ENCODE measurements at regions of chr16 and their contacts with region 1.

Region 1: DNA sequence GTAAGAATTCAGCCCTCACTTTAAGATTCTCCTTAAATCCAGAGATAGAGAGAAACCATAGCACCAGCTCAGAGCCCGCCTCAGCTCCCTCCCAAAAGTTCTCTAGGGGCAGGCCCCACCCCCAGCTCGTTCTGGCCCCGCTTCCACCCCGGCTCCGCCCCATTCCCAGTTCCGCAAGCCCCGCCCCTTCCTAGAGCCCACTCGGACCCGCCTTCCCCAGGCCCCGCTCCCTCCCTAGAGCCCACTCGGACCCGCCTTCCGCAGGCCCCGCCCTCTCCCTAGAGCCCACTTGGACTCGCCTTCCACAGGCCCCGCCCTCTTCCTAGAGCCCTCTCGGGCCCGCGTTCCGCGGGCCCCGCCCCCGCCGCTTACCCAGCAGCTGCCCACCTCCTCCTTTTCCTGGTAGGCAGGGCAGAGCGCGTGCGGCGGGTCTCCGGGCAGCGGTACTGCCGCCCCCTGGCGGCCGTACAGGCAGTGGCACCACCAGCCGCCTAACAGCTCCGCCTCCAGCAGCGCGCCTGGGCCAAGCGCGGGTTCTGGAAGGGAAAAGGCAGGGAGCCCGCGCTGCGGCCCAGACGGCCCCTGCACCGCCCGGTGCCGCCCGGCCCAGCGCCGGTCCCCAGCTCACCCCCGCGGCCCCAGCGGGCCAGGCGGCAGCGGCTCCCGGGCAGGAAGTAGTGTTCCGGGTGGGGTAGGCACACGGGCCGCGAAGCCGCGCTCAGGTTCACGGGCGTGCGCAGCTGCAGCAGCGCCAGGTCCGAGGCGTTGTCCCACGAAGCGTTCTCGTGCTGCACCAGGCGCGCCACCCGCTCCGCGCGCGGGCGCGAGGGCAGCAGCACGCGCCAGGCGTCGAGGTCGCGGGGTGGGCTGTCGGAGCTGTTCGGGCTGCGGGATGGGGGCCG is 6.8 kb upstream of the PRSS8 start:
- DNase-seq: peak; percentile 99
- ATAC-seq: peak; percentile 95
- H3K4me3 ChIP-seq: peak overlapping the region in 4 of 5 experiments; percentile 21 to 71 (median 50)
- H3K4me3 Mint-ChIP-seq: peak overlapping the region; percentile 76
- H3K27ac ChIP-seq: peak overlapping the region; percentile 21 to 54
- H3K27ac Mint-ChIP-seq: peak overlapping the region; percentile 88
- H3K4me1 ChIP-seq: peaks cover 6 to 13% of the 10 kb centered on the region in 2 donors
- H3K4me1 Mint-ChIP-seq: peaks cover 9% of the 10 kb centered on the region
- H3K27me3 ChIP-seq: no peaks in the 10 kb centered on the region
- H3K27me3 Mint-ChIP-seq: peaks cover 6% of the 10 kb centered on the region
- CTCF ChIP-seq: peak; percentile 90

Region 2: DNA sequence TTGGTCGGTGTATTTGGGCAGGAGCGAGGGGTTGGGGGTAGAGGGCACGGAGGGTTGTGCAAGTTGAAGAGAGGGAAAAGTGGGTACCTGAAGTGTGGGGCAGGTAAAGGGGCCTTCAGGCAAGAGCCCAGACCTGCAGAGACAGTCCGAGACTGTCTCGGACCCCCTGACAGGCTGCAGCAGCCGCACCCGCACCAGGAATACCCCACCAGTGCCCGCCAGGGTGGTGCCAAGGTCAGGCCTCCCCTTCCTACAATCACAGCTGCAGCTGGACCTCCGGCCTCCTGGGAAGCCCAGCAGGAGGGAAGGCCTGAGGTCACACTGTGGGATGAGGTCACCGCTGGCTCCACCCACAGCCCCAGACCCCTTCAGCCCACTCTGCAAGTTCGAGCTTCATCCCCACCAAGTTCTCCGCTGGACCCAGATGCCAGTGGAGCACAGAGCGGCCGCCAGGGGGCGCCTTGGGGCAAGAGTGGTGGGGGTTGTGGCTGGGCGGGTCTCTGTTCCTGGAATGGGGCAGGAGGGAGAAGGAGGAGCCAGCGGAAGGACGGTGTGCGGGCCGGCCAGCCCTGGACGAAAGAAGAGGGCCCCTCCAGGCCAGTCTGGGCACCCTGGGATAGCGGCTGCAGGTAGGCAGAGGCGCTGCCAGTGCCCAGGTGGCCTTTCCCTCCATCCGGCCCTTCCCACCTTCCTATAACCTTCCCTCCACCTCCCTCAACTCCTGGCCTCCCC is 157.5 kb before region 1 on chr16 and contains the start of gene HSD3B7:
- CTCF ChIA-PET with region 1: interaction called, 56 read pairs
- POLR2A ChIA-PET with region 1: interaction called, 8 read pairs
- intact Hi-C with region 1: loop called (anchors 1 kb)
- DNase-seq: peak; percentile 81
- ATAC-seq: peak; percentile 81
- H3K4me3 ChIP-seq: no peak within 1 kb of the TSS
- H3K4me3 Mint-ChIP-seq: no peak within 1 kb of the TSS
- H3K27ac ChIP-seq: no peak within 1 kb of the TSS
- H3K27ac Mint-ChIP-seq: no peak within 1 kb of the TSS
- H3K4me1 ChIP-seq: peaks cover 3 to 6% of the 10 kb centered on the region in 2 donors
- H3K4me1 Mint-ChIP-seq: no peaks in the 10 kb centered on the region
- H3K27me3 ChIP-seq: no peaks in the 10 kb centered on the region
- H3K27me3 Mint-ChIP-seq: no peaks in the 10 kb centered on the region
- CTCF ChIP-seq: peak; percentile 90
- total RNA-seq, gene HSD3B7: 1.0 and 1.2 TPM in 2 replicates

Region 3: DNA sequence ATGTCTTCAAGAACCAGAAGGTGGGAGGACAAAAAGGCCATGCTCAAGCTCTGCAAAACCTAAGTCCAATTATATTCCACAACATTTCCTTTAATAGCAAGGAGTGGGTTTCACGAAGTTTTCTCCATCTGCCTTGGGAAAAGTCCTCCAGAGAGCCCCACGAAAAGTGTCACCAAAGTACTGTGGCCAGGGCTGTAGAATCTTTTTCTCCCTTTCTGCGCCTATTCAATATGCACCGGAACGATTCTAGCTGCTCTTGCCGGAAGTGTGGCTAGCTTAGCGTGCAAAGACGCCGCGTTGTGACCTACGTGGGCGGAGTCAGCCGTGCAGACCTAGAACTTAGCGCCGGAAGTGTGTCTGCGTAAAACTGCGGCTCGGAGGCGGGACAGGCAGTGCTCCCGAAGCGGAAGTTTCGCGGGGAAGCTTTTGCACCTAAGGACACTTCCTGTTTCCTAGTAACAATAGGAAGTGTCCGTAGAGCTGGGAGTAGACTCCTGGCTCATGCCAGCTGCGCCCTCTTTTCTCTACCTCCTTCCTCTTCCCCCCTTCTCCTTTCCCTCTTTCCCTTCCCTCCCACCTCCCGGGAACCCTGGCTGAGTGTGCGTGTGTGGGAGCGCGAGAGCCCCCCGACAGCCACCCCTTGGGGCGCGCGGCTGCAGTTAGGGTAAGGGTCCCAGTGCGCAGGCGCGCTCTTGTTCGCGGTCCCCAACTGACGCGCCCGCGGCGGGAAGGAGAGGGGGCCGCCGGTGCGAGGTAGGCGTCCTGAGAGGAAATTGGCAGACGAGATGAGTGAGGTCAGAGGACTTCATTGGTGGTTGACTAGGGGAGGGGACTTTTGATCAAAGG is 68.2 kb before region 1 on chr16 and contains the starts of genes ZNF646 and ZNF668:
- CTCF ChIA-PET with region 1: interaction called, 18 read pairs
- POLR2A ChIA-PET with region 1: interaction called, 12 read pairs
- intact Hi-C with region 1: loop called (anchors 1 kb)
- DNase-seq: peak; percentile 99
- ATAC-seq: peak; percentile 86
- H3K4me3 ChIP-seq: peak within 1 kb of the TSS; percentile 73 to 99 (median 91)
- H3K4me3 Mint-ChIP-seq: peak within 1 kb of the TSS; percentile 95
- H3K27ac ChIP-seq: peak within 1 kb of the TSS; percentile 78 to 89
- H3K27ac Mint-ChIP-seq: peak within 1 kb of the TSS; percentile 96
- H3K4me1 ChIP-seq: peaks cover 20 to 25% of the 10 kb centered on the region in 2 donors
- H3K4me1 Mint-ChIP-seq: peaks cover 36% of the 10 kb centered on the region
- H3K27me3 ChIP-seq: no peaks in the 10 kb centered on the region
- H3K27me3 Mint-ChIP-seq: no peaks in the 10 kb centered on the region
- CTCF ChIP-seq: no peak
- total RNA-seq, gene ZNF646: 45.9 and 51.7 TPM in 2 replicates
- total RNA-seq, gene ZNF668: 11.1 and 12.0 TPM in 2 replicates

Region 4: DNA sequence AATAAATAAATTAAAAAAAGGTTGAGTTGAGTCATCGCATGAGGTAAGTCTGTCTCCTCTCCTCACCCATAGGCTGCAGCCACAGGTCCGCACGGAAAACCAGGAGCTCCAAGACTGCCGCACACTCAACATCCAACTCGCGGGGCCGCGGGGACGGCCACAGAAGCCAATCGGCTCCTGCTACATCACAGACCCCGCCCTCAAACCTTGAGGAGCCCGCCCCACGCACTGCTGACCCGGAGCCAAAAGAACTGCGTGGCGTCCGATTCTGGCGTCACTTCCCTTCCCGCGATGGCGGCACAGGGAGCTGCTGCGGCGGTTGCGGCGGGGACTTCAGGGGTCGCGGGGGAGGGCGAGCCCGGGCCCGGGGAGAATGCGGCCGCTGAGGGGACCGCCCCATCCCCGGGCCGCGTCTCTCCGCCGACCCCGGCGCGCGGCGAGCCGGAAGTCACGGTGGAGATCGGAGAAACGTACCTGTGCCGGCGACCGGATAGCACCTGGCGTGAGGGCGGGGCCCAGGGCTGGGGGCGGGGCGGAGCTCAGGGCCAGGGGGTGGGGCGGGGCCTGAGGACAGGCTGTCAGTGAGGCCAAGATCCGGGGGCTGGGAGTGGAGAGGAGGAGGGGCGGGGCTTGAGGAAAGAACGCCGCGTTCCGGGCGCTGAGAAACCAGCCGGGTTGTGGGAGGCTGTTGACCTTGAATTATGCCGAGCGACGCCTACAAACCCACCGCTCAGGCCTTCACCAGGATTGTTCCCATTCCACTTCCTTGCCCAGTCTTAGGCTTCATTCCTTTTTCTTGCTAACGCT is 24.8 kb before region 1 on chr16 and contains the start of gene KAT8:
- CTCF ChIA-PET with region 1: interaction called, 24 read pairs
- POLR2A ChIA-PET with region 1: interaction called, 36 read pairs
- intact Hi-C with region 1: loop called (anchors 1 kb)
- DNase-seq: peak; percentile 98
- ATAC-seq: peak; percentile 94
- H3K4me3 ChIP-seq: peak within 1 kb of the TSS; percentile 49 to 83 (median 66)
- H3K4me3 Mint-ChIP-seq: peak within 1 kb of the TSS; percentile 92
- H3K27ac ChIP-seq: peak within 1 kb of the TSS; percentile 72 to 95
- H3K27ac Mint-ChIP-seq: peak within 1 kb of the TSS; percentile 96
- H3K4me1 ChIP-seq: peaks cover 10 to 20% of the 10 kb centered on the region in 2 donors
- H3K4me1 Mint-ChIP-seq: peaks cover 15% of the 10 kb centered on the region
- H3K27me3 ChIP-seq: no peaks in the 10 kb centered on the region
- H3K27me3 Mint-ChIP-seq: no peaks in the 10 kb centered on the region
- CTCF ChIP-seq: no peak
- total RNA-seq, gene KAT8: 100.0 and 102 TPM in 2 replicates

Region 5: DNA sequence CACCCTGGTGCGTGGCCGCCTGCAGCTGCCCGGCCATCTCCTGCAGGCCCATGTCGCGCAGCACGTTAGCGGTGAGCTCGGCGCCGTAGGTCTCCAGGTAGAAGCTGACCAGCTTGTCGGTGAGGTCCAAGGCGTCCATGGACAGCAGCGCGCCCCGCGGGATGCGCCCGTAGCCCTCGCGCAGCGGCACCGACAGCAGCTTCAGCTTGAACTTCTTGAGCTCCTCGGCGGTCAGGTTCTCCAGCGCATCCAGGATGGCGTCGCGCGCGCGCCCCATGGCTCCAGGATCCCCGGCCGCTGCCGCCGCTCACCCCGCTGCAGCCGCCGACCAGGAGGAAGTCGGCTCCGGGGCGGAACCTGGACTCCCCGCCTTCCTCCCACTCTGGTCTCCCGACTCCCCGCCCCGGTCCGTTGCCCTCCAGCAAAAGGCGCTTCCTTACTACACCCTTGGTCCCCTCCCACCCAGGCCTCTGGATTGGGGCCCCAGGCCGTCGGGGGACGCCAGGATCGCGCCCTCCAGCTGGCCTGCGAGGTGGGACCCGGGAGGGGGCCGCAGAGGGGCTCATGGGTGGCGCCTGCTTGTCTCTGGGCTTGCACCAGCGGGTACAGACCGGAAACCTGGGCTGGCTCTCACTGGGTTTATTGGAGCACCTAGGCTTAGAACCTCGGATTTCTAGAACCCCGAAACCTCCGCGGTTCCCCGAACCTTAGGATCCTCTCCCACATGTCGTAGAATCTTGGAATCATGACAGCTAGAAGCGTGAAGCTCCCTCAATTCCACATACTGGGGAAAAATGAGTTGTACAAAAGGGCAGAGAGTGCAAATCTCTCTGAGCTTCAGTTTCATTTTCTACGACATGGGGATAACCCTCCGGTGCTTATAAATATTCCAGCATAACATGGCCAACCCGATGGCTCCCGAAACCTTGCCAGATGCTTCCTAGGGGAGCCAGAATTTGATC is 60.3 kb after region 1 on chr16 and contains the start of gene PYCARD:
- CTCF ChIA-PET with region 1: interaction called, 10 read pairs
- POLR2A ChIA-PET with region 1: interaction called, 6 read pairs
- intact Hi-C with region 1: loop called (anchors 2 kb)
- DNase-seq: no peak
- ATAC-seq: peak; percentile 34
- H3K4me3 ChIP-seq: peak within 1 kb of the TSS; percentile 59 to 86 (median 78)
- H3K4me3 Mint-ChIP-seq: peak within 1 kb of the TSS; percentile 92
- H3K27ac ChIP-seq: peak within 1 kb of the TSS; percentile 62 to 73
- H3K27ac Mint-ChIP-seq: peak within 1 kb of the TSS; percentile 95
- H3K4me1 ChIP-seq: peaks cover 32 to 48% of the 10 kb centered on the region in 2 donors
- H3K4me1 Mint-ChIP-seq: peaks cover 55% of the 10 kb centered on the region
- H3K27me3 ChIP-seq: no peaks in the 10 kb centered on the region
- H3K27me3 Mint-ChIP-seq: no peaks in the 10 kb centered on the region
- CTCF ChIP-seq: no peak
- total RNA-seq, gene PYCARD: 31.8 and 35.7 TPM in 2 replicates

Region 6: GRCh38 chr16:31458844-31459721 is 316.7 kb after region 1 on chr16 and contains the start of gene ARMC5:
- CTCF ChIA-PET with region 1: interaction called, 5 read pairs
- POLR2A ChIA-PET with region 1: interaction called, 9 read pairs
- intact Hi-C with region 1: loop called (anchors 1 kb)
- DNase-seq: peak; percentile 99
- ATAC-seq: peak; percentile 76
- H3K4me3 ChIP-seq: peak within 1 kb of the TSS; percentile 71 to 94 (median 87)
- H3K4me3 Mint-ChIP-seq: peak within 1 kb of the TSS; percentile 94
- H3K27ac ChIP-seq: peak within 1 kb of the TSS; percentile 94 to 99
- H3K27ac Mint-ChIP-seq: peak within 1 kb of the TSS; percentile 100
- H3K4me1 ChIP-seq: peaks cover 29 to 42% of the 10 kb centered on the region in 2 donors
- H3K4me1 Mint-ChIP-seq: peaks cover 50% of the 10 kb centered on the region
- H3K27me3 ChIP-seq: no peaks in the 10 kb centered on the region
- H3K27me3 Mint-ChIP-seq: no peaks in the 10 kb centered on the region
- CTCF ChIP-seq: peak; percentile 57
- total RNA-seq, gene ARMC5: 11.2 and 11.7 TPM in 2 replicates

Measured in B cell (primary cell).